ENCODE measurements at regions of chr3 and their contacts with region 1.

Region 1: DNA sequence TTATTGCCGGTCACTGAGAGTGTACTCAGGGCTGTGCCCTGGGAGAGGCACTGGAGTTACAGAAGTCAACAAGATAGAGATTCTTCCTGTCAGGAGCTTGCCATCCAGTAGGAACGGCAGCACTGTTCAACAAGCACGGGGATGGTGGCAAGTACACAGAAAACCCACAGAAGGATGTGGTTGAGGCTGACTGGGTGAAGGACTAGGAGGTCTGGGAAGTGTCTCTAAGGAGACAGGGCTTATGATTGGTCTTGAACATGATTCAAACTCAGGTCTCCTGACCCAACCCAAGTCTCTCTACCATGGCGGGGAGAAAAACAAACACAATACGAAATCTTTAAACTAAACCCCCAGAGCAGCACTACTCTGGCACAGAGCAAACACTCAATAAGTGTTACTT is 37.6 kb downstream of the ERICH6 start:
- DNase-seq: peak; percentile 48
- ATAC-seq: peak; percentile 94
- H3K4me3 Mint-ChIP-seq: peak overlapping the region; percentile 47
- H3K27ac Mint-ChIP-seq: peak overlapping the region; percentile 18
- H3K4me1 Mint-ChIP-seq: peaks cover 25% of the 10 kb centered on the region
- H3K27me3 Mint-ChIP-seq: peaks cover 31% of the 10 kb centered on the region

Region 2: GRCh38 chr3:150635526-150635925 is 30.6 kb before region 1 on chr3:
- POLR2A ChIA-PET with region 1: interaction called, 10 read pairs
- DNase-seq: no peak
- ATAC-seq: peak; percentile 92
- H3K4me3 Mint-ChIP-seq: peak overlapping the region; percentile 63
- H3K27ac Mint-ChIP-seq: peak overlapping the region; percentile 81
- H3K4me1 Mint-ChIP-seq: peaks cover 22% of the 10 kb centered on the region
- H3K27me3 Mint-ChIP-seq: peaks cover 2% of the 10 kb centered on the region

Region 3: GRCh38 chr3:150771600-150771999 is 105.4 kb after region 1 on chr3:
- POLR2A ChIA-PET with region 1: no interaction called
- DNase-seq: no peak
- ATAC-seq: no peak
- H3K4me3 Mint-ChIP-seq: no peak overlapping the region
- H3K27ac Mint-ChIP-seq: no peak overlapping the region
- H3K4me1 Mint-ChIP-seq: no peaks in the 10 kb centered on the region
- H3K27me3 Mint-ChIP-seq: peaks cover 6% of the 10 kb centered on the region

Measured in activated naive CD8-positive, alpha-beta T cell treated with anti-CD3 and anti-CD28 coated beads, Interleukin-2, amount 10 ng/mL, durations not matched to agents 7 days and 5 days (primary cell).